Posterior vena cava (tissue), 2 donors: ENCODE measurements at regions of chr16 and their contacts with region 1.

Region 1: DNA sequence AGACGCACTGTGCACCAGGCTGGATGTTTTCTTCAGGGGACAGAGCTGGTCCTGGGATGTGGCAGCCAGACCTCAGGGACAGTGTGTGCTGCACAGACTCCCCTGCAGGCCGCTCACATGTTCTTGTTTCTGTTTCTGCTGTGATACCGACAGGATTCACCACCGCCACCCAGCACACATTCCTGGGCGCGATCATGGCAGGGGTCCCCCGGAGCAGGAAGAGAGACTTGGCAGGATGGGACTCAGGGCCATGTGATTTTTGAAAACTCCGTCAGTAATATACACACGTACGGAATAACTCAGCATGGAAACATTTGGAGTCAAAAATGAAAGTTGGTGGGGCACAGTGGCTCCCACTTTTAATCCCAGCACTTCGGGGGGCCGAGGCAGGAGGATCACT is 79.0 kb downstream of the HAPSTR1 start:
- DNase-seq: no peak

Region 2: DNA sequence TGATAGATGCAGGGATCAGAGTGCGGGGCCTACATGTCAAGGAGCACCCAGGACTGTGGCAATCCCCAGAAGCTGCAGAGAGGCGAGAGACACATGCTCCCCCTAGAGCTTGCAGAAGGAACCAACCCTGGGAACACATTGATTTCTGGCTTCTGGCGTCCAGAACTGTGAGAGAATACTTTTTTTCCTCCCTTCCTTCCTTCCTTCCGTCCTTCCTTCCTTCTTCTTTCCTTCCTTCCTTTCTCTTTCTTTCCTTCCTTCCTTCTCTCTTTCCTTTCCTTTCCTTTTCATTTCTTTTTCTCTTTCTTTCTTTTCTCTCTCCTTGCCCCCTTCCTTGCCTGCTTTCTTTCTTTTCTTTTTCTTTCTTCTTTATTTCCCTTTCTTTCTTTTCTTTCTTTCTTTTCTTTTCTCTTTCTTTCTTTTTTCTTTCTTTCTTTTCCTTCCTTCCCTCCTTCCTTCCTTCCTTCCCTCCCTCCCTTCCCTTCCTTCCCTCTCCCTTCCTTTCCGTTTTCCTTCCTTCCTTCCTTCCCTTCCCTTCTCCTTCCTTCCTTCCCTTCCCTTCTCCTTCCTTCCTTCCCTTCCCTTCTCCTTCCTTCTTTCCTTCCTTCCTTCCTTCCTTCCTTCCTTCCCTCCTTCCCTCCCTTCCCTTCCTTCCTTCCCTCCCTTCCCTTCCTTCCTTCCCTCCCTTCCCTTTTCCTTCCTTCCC is 55.3 kb after region 1 on chr16:
- intact Hi-C with region 1: no loop called
- DNase-seq: no peak

Region 3: DNA sequence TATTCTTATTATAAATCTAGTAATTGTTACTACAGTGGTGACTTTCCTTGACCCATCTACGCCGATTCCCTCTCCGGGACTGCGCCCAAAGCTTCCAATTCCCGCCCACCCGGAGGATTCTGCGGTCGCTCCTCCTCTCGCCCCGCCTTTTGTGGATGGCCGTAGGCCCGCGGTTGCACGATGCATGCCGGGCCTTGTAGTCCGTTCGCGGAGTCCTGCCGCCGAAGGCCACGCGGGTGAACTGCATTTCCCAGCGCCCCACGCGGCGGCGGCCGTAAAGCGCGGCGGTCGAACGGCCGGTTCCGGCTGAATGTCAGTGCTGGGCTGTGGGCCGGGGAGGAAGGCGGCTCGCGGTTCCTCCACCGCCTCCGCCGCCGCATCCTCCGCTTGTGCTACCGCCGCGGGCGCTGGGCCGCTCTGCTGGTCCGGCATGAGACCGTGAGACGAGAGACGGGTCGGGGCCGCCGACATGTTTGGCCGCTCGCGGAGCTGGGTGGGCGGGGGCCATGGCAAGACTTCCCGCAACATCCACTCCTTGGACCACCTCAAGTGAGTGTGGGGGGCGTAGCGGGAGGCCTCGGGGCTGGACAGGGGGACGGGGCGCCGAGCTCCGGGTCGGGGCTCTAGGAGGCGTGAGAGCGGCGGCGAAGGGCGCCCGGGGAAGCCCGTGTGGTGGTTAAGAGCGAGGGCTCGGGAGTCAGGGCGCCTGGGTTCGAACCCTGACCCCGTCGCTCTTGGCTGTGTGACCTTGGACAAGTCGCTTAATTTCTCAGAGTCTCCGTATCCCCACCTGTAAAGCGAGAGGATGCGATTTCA is 1774.0 kb after region 1 on chr16 and contains the start of gene CLEC16A:
- intact Hi-C with region 1: loop called in 1 of 2 experiments (anchors 5 kb)
- DNase-seq: peak; percentile 99
- total RNA-seq, gene CLEC16A: 19.4 to 20.1 TPM